ENCODE measurements at regions of chr10 and their contacts with region 1.

Region 1: GRCh38 chr10:34172936-34173533 is 642.1 kb downstream of the PARD3 start:
- DNase-seq: no peak
- H3K27ac ChIP-seq: no peak overlapping the region
- CTCF ChIP-seq: no peak

Region 2: GRCh38 chr10:33174674-33175434 is 998.2 kb before region 1 on chr10:
- CTCF ChIA-PET with region 1: interaction called, 11 read pairs
- POLR2A ChIA-PET with region 1: no interaction called
- DNase-seq: no peak
- H3K27ac ChIP-seq: no peak overlapping the region
- CTCF ChIP-seq: no peak